ENCODE measurements at regions of chr5 and their contacts with region 1.

Region 1: DNA sequence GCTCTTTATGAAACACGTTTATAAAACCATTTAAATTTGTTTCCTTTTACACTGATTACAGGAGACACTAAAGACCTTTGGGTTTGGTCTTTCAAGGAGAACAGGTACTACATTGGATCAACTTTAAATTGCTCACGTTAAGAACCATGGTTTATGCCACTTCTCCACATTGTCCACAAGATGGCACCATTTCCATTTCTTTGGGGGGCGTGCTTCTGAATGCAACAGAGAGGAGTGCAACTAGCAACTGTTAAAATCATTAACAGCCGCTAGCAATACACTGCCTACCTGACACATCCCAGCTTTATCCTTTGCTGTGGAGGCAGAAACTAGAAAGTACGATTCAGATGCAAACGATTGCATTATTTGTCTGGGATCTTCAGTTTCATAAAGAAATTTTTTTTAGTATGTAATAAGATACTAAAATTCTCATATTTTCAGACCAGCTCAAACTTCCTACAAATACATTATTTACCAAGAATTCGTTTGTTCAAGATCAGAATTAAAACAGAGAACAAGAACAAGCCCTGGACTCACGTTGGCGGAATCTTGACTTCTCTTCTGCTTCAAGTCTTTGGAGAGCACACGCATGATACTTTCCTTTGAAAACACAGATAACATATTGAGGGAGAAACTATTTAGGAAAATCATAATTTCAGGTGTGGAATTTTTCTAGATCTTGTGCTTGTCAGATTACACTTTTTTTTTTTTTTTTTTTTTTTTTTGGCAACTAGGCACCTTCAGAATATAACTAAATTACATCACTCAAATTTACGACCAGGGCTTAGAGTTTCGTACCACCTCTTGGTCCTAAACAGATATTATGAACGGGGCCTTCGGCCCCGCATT is 702 bp downstream of the CDC20B start:
- DNase-seq: peak; percentile 91
- H3K4me3 Mint-ChIP-seq: peak overlapping the region; percentile 86
- H3K27ac Mint-ChIP-seq: no peak overlapping the region
- H3K4me1 Mint-ChIP-seq: peaks cover 33% of the 10 kb centered on the region
- H3K27me3 Mint-ChIP-seq: peaks cover 72% of the 10 kb centered on the region

Region 2: GRCh38 chr5:54310433-54311175 is 861.7 kb before region 1 on chr5 and contains the start of gene ARL15:
- intact Hi-C with region 1: loop called (anchors 10 kb)
- DNase-seq: peak; percentile 99
- H3K4me3 Mint-ChIP-seq: peak within 1 kb of the TSS; percentile 88
- H3K27ac Mint-ChIP-seq: peak within 1 kb of the TSS; percentile 88
- H3K4me1 Mint-ChIP-seq: peaks cover 22% of the 10 kb centered on the region
- H3K27me3 Mint-ChIP-seq: peaks cover 18% of the 10 kb centered on the region
- total RNA-seq, gene ARL15: 4.5 and 7.4 TPM in 2 replicates

Region 3: DNA sequence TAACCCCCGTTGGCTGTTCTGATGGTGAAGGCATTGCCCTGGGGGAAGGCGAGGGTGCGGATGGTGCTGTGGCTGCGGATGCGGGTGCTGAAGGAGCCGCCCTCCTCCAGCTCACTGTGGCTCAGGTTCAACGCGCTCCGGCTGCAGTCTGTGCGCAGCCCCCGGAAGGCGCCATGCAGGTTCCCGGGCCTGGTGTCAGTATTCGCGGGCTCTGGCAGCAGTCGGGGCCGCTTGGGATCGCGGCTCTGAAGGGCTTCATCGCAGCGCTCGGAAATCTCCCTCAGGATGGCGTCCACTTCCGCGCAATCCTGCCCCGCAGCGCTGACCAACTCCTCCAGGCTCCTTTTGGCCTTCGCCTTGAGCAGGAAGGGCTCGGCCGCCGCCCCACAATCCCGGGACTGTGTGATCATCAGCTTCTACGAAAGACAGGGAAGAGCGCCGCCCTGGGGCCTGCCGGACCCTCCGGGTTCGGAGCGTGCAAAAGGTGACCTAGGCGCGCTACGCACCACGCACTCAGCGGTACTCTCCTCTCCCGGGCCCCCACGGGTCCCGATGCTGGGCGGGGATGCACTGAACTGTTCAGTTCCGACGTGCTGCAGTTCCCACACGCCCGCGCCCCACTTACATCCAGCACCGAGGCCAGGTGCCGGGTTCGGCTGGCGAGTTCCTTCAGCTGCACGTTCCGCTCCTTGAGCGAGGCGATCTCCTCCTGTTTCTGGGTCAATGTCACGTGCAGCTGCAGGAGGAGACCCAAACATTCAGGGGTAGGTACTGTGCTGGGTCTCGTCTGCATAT is 48.3 kb after region 1 on chr5:
- intact Hi-C with region 1: no loop called
- DNase-seq: peak; percentile 67
- H3K4me3 Mint-ChIP-seq: peak overlapping the region; percentile 77
- H3K27ac Mint-ChIP-seq: peak overlapping the region; percentile 15
- H3K4me1 Mint-ChIP-seq: peaks cover 18% of the 10 kb centered on the region
- H3K27me3 Mint-ChIP-seq: peaks cover 79% of the 10 kb centered on the region

Region 4: GRCh38 chr5:55232985-55233928 is 61.0 kb after region 1 on chr5 and contains the start of gene CCNO:
- intact Hi-C with region 1: loop called (anchors 1 kb)
- DNase-seq: peak; percentile 90
- H3K4me3 Mint-ChIP-seq: peak within 1 kb of the TSS; percentile 86
- H3K27ac Mint-ChIP-seq: peak within 1 kb of the TSS; percentile 71
- H3K4me1 Mint-ChIP-seq: peaks cover 29% of the 10 kb centered on the region
- H3K27me3 Mint-ChIP-seq: peaks cover 78% of the 10 kb centered on the region
- total RNA-seq, gene CCNO: 0.26 TPM in 1 of 2 replicates, not detected in the other

Region 5: DNA sequence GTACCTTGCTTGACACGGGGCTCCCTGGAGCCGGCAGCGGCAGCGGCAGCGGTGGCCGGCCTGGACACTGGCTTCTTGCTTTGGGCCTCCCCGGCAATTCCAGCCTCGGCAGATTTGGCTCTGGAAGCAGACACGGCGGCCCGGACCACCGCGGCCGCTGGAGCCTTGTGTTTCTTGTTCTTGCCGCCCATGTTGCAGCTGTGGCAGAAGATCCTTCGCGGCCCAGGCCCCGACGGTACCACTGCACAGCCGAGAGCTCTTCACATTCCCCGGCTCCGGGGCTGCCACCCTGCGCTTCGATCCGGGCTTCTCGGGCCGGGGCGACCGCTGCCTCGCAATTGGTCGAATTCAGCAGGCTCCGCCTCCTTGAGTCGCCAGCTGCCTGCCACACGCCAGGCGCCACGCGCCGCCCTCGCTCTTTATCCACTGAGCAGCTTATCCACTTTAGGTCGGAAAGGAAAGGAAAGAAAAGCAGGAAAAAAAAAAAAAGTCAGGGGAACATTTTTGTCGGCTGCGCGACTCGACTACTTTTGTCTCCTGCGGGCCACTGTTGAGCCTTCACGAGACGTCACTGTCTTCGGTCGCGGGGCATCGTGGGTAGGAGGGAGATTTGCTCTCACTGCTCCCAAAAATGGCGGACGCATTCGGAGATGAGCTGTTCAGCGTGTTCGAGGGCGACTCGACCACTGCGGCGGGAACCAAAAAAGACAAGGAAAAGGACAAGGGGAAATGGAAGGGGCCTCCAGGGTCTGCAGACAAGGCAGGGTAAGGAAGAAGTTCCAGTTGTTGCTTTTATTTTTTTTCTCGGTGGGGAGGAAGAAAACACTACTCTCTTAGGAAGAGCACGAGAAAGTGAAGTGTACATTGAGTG is 135.3 kb after region 1 on chr5 and contains the starts of genes DHX29 and MTREX:
- intact Hi-C with region 1: loop called (anchors 1 kb)
- DNase-seq: peak; percentile 97
- H3K4me3 Mint-ChIP-seq: no peak within 1 kb of the TSS
- H3K27ac Mint-ChIP-seq: no peak within 1 kb of the TSS
- H3K4me1 Mint-ChIP-seq: peaks cover 22% of the 10 kb centered on the region
- H3K27me3 Mint-ChIP-seq: no peaks in the 10 kb centered on the region
- total RNA-seq, gene DHX29: 18.0 and 18.2 TPM in 2 replicates
- total RNA-seq, gene MTREX: 123 and 128 TPM in 2 replicates

Region 6: GRCh38 chr5:55387874-55388273 is 215.6 kb after region 1 on chr5:
- intact Hi-C with region 1: no loop called
- DNase-seq: no peak
- H3K4me3 Mint-ChIP-seq: no peak overlapping the region
- H3K27ac Mint-ChIP-seq: no peak overlapping the region
- H3K4me1 Mint-ChIP-seq: peaks cover 18% of the 10 kb centered on the region
- H3K27me3 Mint-ChIP-seq: no peaks in the 10 kb centered on the region

Region 7: DNA sequence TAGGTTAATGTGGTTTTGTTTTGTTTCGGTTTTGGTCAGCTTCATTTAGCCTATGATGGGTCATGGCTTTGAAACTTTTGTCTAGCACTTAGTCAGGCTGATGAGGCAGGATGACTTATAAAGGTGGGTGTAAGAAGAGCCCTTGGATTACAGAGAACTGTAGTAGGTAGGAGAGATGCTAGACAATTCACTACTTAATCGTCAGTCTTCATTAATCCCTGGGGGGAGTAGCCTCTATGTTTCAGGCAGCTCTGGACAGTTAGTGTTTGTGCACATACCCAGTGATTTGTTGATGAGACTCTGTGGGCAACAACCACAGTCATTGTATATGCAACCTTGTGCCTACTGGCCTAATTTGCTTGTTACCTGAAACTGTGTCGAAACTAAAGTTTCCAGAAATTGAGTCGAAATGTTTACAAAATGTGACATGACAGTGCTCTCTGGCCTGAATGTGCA is 248.8 kb after region 1 on chr5:
- intact Hi-C with region 1: loop called (anchors 10 kb)
- DNase-seq: no peak
- H3K4me3 Mint-ChIP-seq: no peak overlapping the region
- H3K27ac Mint-ChIP-seq: peak overlapping the region; percentile 16
- H3K4me1 Mint-ChIP-seq: peaks cover 17% of the 10 kb centered on the region
- H3K27me3 Mint-ChIP-seq: no peaks in the 10 kb centered on the region

Region 8: DNA sequence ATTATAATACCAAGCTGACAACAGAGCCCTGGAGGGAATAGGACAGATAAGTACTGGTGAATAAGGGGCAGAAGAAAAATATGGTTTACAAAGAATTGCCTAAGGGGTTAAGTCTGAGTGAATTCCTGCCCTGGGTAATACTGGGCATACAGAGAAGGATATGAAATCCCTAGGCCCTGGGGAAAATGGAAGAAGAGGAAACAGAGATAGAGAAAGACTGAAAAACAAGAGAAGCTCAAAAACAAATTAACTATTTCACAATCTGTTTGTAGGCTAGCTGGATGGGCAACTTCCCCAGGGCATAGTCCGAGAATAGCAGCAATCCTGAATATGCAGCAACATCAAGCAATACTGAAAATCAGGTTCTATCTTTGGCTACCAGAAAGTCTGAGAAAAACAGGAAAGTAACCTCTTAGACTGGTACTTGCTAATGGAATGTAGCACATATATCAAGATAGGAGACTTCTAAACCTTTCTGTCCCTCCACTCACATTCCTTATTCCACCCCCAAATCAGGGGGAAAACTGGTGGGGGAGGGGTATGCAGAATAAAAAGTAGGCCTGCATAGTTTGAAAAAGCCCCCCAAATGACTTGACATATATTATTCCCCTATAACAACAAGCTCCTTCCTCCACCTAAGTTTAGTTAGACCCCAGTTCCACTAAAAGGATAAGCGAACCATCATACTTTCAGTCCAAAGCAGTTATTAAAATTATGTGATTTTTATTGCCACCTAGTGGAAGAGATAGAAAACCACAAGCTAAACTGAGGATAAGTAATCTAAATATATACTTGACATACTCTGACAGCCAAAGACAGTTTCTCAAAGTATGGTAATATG is 519.2 kb after region 1 on chr5:
- intact Hi-C with region 1: loop called (anchors 2 kb)
- DNase-seq: no peak
- H3K4me3 Mint-ChIP-seq: no peak overlapping the region
- H3K27ac Mint-ChIP-seq: no peak overlapping the region
- H3K4me1 Mint-ChIP-seq: peaks cover 12% of the 10 kb centered on the region
- H3K27me3 Mint-ChIP-seq: no peaks in the 10 kb centered on the region

Region 9: GRCh38 chr5:55903121-55903701 is 730.9 kb after region 1 on chr5:
- intact Hi-C with region 1: loop called (anchors 10 kb)
- DNase-seq: peak; percentile 93
- H3K4me3 Mint-ChIP-seq: peak overlapping the region; percentile 67
- H3K27ac Mint-ChIP-seq: peak overlapping the region; percentile 67
- H3K4me1 Mint-ChIP-seq: peaks cover 44% of the 10 kb centered on the region
- H3K27me3 Mint-ChIP-seq: no peaks in the 10 kb centered on the region

Measured in activated CD4-positive, alpha-beta T cell treated with anti-CD3 and anti-CD28 coated beads, Interleukin-2, amount 10 ng/mL, durations not matched to agents 24 days and 14 days (primary cell).